PC-3 (cell line): ENCODE measurements at regions of chr21 and their contacts with region 1.

Region 1: DNA sequence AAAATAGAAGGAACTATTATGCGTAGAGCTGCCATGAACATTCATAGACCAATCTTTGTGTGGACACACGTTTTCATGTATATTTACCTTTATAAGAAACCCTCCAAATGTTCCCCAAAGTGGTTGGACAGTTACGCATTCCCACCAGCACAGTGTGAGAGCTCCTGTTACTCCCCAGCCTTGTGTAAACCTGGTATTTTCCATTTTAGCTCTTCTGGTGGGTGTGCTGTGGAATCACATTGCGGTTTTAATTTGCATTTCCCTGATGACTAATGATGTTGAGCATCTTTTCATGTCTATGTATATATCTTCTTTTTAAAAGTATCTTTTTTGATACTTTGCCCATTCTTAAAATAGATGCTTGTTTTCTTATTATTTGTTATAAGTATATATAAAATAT is 3.2 kb upstream of the UBASH3A start:
- DNase-seq: peak; percentile 23
- ATAC-seq: peak; percentile 32
- H3K4me3 ChIP-seq: no peak overlapping the region
- H3K27ac ChIP-seq: no peak overlapping the region
- H3K4me1 ChIP-seq: peaks cover 19% of the 10 kb centered on the region
- H3K27me3 ChIP-seq: no peaks in the 10 kb centered on the region
- CTCF ChIP-seq: no peak

Region 2: DNA sequence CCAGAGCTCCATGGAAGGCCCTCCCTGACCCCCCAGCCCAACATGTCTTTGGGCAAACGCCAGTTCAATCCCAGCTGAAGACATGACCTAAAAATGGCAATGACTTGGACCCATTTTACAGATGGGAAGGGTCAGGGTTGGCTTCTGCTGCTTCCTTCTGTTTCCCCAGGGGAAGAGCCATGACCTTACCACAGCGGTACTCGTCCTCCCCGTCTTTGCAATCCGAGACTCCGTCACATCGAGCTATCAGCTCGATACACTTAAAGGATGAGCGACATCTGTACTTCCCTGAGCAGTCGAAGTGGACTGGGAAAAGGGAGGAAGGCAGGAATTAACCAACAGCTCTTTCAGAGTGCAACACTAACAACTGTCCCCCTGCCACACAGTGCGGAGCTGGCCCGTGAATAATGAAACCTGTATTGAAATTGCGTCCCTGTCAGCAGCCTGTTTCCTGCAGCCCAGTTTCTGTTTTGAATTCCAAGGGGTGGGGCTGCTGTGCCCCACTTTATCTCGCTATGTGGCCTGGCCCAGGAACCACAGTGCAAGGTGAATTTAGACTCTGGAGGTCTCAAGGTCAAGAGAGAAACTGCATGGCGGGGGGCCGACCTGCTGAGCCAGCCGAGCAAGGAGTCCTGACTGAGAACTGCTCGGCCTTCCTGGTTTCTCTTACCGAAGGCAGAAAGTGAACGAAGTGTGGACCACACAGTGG is 11.6 kb before region 1 on chr21:
- CTCF ChIA-PET with region 1: no interaction called
- POLR2A ChIA-PET with region 1: no interaction called
- intact Hi-C with region 1: loop called (anchors 1 kb)
- DNase-seq: no peak
- ATAC-seq: no peak
- H3K4me3 ChIP-seq: no peak overlapping the region
- H3K27ac ChIP-seq: peak overlapping the region; percentile 70
- H3K4me1 ChIP-seq: peaks cover 38% of the 10 kb centered on the region
- H3K27me3 ChIP-seq: no peaks in the 10 kb centered on the region
- CTCF ChIP-seq: no peak